A673 (cell line): ENCODE measurements at regions of chr22 and their contacts with region 1.

Region 1: GRCh38 chr22:35921777-35922176 is 106.8 kb downstream of the RBFOX2 start:
- DNase-seq: peak; percentile 93
- H3K4me3 ChIP-seq: no peak overlapping the region
- H3K27ac ChIP-seq: peak overlapping the region; percentile 3
- H3K4me1 ChIP-seq: peaks cover 72% of the 10 kb centered on the region
- H3K27me3 ChIP-seq: no peaks in the 10 kb centered on the region
- CTCF ChIP-seq: peak; percentile 79

Region 2: GRCh38 chr22:35350539-35351503 is 571.0 kb before region 1 on chr22:
- CTCF ChIA-PET with region 1: no interaction called
- POLR2A ChIA-PET with region 1: no interaction called
- intact Hi-C with region 1: loop called (anchors 2 kb)
- DNase-seq: peak; percentile 91
- H3K4me3 ChIP-seq: peak overlapping the region; percentile 55
- H3K27ac ChIP-seq: peak overlapping the region; percentile 27
- H3K4me1 ChIP-seq: peaks cover 13% of the 10 kb centered on the region
- H3K27me3 ChIP-seq: no peaks in the 10 kb centered on the region
- CTCF ChIP-seq: peak; percentile 90

Region 3: DNA sequence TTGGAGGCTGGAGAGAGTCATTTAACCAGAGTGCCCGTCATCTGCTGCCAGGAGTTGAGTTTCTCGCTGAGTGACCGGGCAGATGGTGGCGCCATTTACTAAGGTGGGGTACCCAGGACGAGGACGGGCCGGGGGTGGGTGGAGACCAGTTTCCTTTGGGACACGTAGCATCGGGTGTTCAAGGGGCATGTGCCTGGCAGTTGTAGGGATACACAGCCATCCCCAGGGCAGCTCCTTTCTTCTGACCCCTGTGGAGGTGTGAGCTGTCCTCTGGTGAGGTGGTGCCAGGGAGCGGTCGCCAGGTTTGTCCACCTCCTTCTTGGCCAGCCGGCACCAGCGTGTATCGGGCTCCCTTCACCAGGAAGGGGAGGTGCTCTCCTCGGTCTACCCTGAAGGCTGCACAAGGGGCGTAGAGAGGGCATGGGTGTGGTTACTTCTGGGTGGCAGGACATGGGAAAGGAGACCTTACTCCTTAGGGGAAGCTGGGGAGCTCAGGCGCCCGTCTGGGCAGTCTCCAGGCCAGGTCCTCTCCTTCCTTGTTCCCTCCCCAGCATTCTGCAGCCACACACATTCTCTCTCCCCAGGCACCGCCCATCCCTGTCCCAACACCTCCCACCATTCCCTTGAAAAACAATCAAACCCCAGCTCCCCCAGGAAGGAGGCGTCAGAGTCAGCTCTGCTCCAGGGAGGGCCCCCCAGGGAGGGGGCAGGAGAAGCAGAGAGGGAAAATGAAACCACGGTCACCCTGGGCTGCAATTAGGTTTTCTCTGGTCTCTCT is 294.3 kb before region 1 on chr22:
- CTCF ChIA-PET with region 1: no interaction called
- POLR2A ChIA-PET with region 1: no interaction called
- intact Hi-C with region 1: loop called (anchors 2 kb)
- DNase-seq: peak; percentile 90
- H3K4me3 ChIP-seq: peak overlapping the region; percentile 49
- H3K27ac ChIP-seq: peak overlapping the region; percentile 45
- H3K4me1 ChIP-seq: peaks cover 18% of the 10 kb centered on the region
- H3K27me3 ChIP-seq: no peaks in the 10 kb centered on the region
- CTCF ChIP-seq: peak; percentile 75

Region 4: GRCh38 chr22:35761037-35761436 is 160.7 kb before region 1 on chr22:
- CTCF ChIA-PET with region 1: no interaction called
- POLR2A ChIA-PET with region 1: interaction called, 3 read pairs
- intact Hi-C with region 1: loop called (anchors 2 kb)
- DNase-seq: peak; percentile 58
- H3K4me3 ChIP-seq: no peak overlapping the region
- H3K27ac ChIP-seq: no peak overlapping the region
- H3K4me1 ChIP-seq: no peaks in the 10 kb centered on the region
- H3K27me3 ChIP-seq: no peaks in the 10 kb centered on the region
- CTCF ChIP-seq: peak; percentile 63

Region 5: DNA sequence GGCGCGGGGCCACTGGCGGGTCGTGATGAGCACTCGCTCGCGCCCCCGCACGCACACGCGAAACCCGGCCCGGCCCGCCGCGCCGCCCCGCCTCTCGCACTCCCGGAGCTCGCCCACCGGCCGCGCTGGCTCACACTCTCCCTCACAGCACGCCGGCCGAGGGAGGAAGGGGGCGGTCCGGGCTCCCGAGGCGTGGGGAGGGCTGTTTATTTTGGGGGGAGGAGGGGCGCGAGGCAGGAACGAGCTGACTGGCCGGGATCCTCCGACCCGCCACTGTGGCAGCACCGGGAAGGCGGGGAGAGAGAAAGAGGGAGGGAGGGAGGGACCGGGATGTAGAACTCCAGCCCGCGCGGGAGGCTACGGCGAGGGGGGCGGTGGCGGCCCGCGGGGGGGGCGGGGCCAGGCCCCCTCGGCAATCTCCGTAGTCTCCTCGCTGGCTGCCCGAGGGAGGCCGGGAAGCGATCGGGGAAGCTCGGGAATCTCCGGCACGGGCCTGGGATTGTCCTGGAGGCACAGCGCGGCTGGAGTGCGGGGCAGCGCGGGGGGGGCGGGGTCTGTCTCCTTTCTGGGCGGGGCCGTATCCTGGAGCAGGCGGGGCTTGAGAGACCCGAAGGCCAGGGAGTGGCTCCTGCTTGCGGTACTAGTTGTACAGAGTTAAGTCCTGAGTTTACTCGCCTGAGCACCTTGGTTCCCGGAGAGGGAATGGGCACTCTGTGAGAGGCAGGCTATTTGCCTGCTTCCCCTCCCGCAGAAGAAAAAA is 107.0 kb after region 1 on chr22 and contains the start of gene RBFOX2:
- CTCF ChIA-PET with region 1: no interaction called
- POLR2A ChIA-PET with region 1: no interaction called
- intact Hi-C with region 1: loop called (anchors 5 kb)
- DNase-seq: peak; percentile 97
- H3K4me3 ChIP-seq: peak within 1 kb of the TSS; percentile 89
- H3K27ac ChIP-seq: peak within 1 kb of the TSS; percentile 84
- H3K4me1 ChIP-seq: peaks cover 21% of the 10 kb centered on the region
- H3K27me3 ChIP-seq: no peaks in the 10 kb centered on the region
- CTCF ChIP-seq: no peak
- total RNA-seq, gene RBFOX2: 142 and 154 TPM in 2 replicates